Heart left ventricle (tissue), 16 donors: ENCODE measurements at regions of chr1 and their contacts with region 1.

Region 1: DNA sequence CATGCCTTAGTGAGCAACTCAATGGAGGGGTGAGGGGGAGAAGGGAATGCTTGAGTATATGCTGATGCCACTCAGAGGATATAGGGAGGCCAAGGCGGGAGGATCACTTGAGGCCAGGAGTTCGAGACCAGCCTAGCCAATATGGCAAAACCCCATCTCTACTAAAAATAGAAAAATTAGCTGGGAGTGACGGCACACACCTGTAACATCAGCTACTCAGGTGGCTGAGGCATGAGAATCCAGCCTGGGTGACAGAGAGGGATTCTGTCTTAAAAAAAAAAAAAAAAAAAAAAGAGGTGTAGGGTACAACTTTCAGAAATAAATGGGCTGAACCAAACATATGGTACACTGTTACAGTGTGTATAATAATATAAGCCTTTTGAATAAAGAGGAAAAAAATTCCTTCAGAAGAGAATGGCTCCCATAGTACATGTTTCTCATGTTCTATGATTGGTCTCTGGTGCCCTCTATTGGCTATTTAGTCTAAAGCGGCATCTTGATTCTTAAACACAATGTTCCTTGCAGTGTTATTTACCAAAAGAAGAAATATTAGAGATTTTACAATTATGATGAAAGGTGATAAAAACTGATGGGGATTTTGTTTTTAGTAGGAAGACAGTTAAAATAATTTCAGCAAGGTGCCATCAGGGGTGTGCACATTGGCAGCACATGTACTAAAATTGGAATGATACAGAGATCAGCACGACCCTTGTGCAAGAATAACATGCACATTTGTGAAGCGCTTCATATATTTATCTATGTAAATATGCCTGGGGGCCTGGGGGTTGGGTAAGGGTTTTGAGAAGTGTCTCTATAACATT is 109.8 kb downstream of the PATJ start:
- DNase-seq: peak in 1 of 5 donors; percentile 20
- ATAC-seq: peak in 3 of 4 donors; percentile 54 to 77 (median 72)
- H3K4me3 ChIP-seq: no peak overlapping the region
- H3K27ac ChIP-seq: no peak overlapping the region
- H3K4me1 ChIP-seq: peaks cover 0 to 5% (median 0%) of the 10 kb centered on the region in 12 donors
- H3K27me3 ChIP-seq: no peaks in the 10 kb centered on the region
- CTCF ChIP-seq: peak; percentile 53 to 84 (median 76)
- POLR2A ChIP-seq: no peak

Region 2: DNA sequence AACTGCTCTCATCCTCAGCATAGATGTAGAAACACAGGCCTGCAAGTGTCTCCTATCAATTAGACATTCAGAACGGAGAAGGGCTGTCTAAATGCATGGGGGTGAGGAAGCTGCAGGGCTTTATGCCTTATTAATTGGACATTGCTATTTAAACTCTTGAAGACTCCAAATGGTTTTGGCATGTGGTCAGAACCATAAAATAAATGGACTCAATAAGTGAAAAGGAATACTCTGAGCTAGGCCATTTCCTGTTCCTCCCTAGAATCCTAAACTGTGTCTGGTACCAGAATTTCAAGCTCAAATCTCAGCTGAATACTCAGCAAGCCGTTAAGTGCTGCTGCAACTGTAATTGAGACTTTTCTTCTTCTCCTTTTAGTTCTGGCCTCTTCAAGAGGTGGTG is 1698.1 kb before region 1 on chr1:
- intact Hi-C with region 1: loop called in 1 of 10 experiments (anchors 10 kb)
- DNase-seq: no peak
- ATAC-seq: no peak
- H3K4me3 ChIP-seq: no peak overlapping the region
- H3K27ac ChIP-seq: no peak overlapping the region
- H3K4me1 ChIP-seq: no peaks in the 10 kb centered on the region
- H3K27me3 ChIP-seq: no peaks in the 10 kb centered on the region
- CTCF ChIP-seq: no peak
- POLR2A ChIP-seq: no peak

Region 3: GRCh38 chr1:60848583-60849188 is 1003.4 kb before region 1 on chr1:
- intact Hi-C with region 1: loop called in 3 of 10 experiments (anchors 5 to 10 kb)
- DNase-seq: no peak
- ATAC-seq: no peak
- H3K4me3 ChIP-seq: no peak overlapping the region
- H3K27ac ChIP-seq: no peak overlapping the region
- H3K4me1 ChIP-seq: peaks cover 0 to under 1% (median 0%) of the 10 kb centered on the region in 12 donors
- H3K27me3 ChIP-seq: no peaks in the 10 kb centered on the region
- CTCF ChIP-seq: peak; percentile 29 to 62 (median 52)
- POLR2A ChIP-seq: no peak

Region 4: GRCh38 chr1:60969971-60970509 is 882.0 kb before region 1 on chr1:
- intact Hi-C with region 1: loop called in 9 of 10 experiments (anchors 2 to 10 kb)
- DNase-seq: no peak
- ATAC-seq: peak; percentile 48 to 78 (median 60)
- H3K4me3 ChIP-seq: peak overlapping the region in 4 of 12 donors; percentile 2 to 25 (median 10)
- H3K27ac ChIP-seq: peak overlapping the region in 8 of 12 donors; percentile 31 to 79 (median 62)
- H3K4me1 ChIP-seq: peaks cover 0 to 15% (median 2%) of the 10 kb centered on the region in 12 donors
- H3K27me3 ChIP-seq: no peaks in the 10 kb centered on the region
- CTCF ChIP-seq: peak in 11 of 12 donors; percentile 32 to 69 (median 56)
- POLR2A ChIP-seq: no peak

Region 5: GRCh38 chr1:61043010-61043820 is 808.8 kb before region 1 on chr1:
- intact Hi-C with region 1: loop called in 6 of 10 experiments (anchors 5 to 10 kb)
- DNase-seq: peak; percentile 89 to 95 (median 90)
- ATAC-seq: peak; percentile 87 to 97 (median 96)
- H3K4me3 ChIP-seq: peak overlapping the region; percentile 28 to 67 (median 59)
- H3K27ac ChIP-seq: peak overlapping the region in 10 of 12 donors; percentile 22 to 82 (median 72)
- H3K4me1 ChIP-seq: peaks cover 0 to 11% (median 4%) of the 10 kb centered on the region in 12 donors
- H3K27me3 ChIP-seq: no peaks in the 10 kb centered on the region
- CTCF ChIP-seq: peak; percentile 86 to 94 (median 92)
- POLR2A ChIP-seq: no peak

Region 6: DNA sequence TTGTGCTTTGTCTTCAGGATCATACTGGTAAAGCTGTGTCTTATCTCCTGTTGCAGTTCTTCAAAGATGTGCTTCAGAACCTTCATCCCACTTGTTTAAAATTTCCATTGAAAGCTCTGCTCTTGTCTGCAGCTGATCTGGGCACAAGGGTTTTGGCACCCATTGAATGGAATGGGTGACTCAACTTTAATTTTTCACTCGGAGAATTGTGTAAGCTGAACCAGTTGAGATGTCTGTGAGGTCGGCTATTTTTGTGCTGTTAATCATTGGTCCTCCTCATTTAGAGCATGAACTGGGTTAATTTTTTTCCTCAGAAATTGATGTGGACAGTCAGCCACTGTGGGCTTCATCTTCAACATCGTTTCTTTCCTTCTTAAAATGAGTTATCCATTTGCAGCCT is 379.2 kb before region 1 on chr1:
- intact Hi-C with region 1: loop called in 3 of 10 experiments (anchors 10 kb)
- DNase-seq: no peak
- ATAC-seq: no peak
- H3K4me3 ChIP-seq: no peak overlapping the region
- H3K27ac ChIP-seq: no peak overlapping the region
- H3K4me1 ChIP-seq: no peaks in the 10 kb centered on the region
- H3K27me3 ChIP-seq: no peaks in the 10 kb centered on the region
- CTCF ChIP-seq: no peak
- POLR2A ChIP-seq: no peak

Region 7: DNA sequence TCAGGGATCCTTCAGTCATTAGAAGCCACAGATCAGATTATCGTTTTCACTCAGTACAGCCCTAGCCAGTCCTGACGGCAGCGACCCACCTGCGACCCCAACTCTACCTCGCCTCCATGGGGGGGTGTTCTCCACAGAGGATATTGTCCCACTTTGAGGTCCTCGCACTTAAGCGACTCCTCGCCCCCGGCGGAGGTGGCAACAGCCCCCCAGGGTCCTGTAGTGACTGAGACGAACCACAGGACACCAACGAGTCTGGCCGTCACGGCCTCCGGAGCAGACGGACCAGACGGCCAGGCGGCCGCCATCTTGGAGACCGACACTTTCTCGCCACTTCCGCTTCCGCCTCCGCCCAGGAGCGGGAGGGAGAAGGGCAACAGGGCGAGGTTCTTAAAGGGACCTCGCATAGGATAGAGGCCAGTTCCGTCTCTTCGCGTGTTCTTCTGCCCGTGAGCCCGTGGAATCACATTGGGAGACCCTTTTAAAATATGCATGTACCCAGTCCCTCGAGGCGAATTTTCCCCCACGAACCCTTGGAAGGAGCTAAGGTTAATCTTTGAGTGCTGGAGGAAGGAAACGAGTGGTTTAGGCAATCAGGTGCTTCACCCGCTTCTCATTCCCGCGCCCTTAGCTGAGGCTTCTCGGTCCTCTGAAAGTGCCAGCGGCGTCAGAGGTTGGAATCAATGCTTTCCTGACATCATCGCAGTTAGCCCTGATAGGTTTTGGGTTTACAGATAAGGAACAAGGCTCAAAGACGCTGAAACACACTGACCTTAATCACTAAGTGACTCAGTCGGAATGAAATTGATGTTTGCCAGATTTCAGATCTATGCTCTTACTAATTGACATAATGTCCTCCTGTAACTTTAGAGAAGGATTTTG is 127.0 kb before region 1 on chr1 and contains the start of gene TM2D1:
- intact Hi-C with region 1: loop called in 2 of 10 experiments (anchors 5 kb)
- DNase-seq: peak; percentile 88 to 94 (median 93)
- ATAC-seq: peak; percentile 97 to 99 (median 99)
- H3K4me3 ChIP-seq: peak within 1 kb of the TSS; percentile 65 to 99 (median 92)
- H3K27ac ChIP-seq: peak within 1 kb of the TSS; percentile 72 to 97 (median 92)
- H3K4me1 ChIP-seq: peaks cover 0 to 28% (median 15%) of the 10 kb centered on the region in 12 donors
- H3K27me3 ChIP-seq: no peaks in the 10 kb centered on the region
- CTCF ChIP-seq: no peak
- POLR2A ChIP-seq: peak; percentile 23 to 67
- total RNA-seq, gene TM2D1: 28.5 to 44.0 (median 34.4) TPM

Region 8: DNA sequence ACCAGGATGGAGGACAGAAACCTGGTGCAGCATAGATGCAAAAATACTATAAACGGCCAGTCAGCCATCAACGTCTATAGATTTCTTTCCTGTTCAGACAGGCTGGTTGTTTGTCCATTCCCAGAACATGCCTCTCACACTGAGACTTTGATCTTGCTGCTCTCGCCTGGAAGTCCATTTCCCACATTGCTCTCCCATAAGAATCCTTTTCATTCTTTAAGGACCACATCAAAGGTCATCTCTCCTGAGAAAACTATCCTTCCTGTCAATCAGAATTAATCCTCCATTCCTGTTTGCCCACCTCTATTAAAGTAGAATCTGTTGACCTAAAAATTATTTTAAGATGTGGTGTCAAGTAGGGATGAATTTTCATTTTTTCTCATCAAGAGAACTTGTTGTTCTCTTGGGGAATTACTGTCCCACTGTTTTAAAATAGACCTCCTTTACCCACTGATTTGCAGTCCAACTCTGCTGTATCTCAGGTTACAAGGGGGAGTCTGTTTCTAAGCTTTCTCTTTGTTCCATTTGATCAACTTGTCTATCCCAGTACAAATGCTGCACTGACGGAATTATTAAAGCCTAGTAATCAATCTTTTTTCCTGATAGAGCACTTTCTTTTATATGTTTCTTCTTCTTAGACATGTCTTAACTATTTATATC is 62.9 kb after region 1 on chr1:
- intact Hi-C with region 1: no loop called
- DNase-seq: no peak
- ATAC-seq: no peak
- H3K4me3 ChIP-seq: no peak overlapping the region
- H3K27ac ChIP-seq: no peak overlapping the region
- H3K4me1 ChIP-seq: no peaks in the 10 kb centered on the region
- H3K27me3 ChIP-seq: no peaks in the 10 kb centered on the region
- CTCF ChIP-seq: no peak
- POLR2A ChIP-seq: no peak

Region 9: DNA sequence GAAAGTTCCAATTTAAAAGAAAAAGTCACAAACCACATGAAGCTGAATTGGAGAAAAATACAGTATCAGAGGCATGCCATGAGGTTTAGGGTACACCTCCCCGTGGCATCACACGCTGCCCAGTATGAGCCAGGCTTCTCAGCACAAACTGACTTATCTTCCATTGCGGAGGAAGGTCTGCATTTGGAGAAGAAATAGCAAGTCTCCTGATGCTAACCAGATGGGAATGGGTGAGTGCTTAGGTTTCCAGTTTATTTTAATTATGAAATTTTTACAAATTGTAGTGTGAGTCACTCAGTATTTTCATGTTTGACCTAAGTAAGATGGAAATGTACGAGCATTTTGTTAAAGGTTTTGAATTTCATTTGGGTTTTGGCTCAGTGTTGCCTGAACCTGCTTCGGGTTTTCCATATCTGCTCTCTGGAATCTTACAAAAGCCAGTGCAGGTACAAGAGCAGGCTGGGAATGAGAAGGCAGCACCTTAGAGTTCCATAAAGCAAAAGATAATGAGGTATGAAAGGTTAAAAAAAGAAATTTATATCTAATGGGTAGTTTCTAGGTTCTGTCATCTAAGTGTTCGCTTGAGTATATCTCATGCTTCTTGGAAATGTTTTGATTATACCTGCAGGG is 104.1 kb after region 1 on chr1:
- intact Hi-C with region 1: no loop called
- DNase-seq: no peak
- ATAC-seq: peak in 1 of 4 donors; percentile 25
- H3K4me3 ChIP-seq: peak overlapping the region in 6 of 12 donors; percentile 1 to 26 (median 10)
- H3K27ac ChIP-seq: peak overlapping the region in 8 of 12 donors; percentile 24 to 85 (median 40)
- H3K4me1 ChIP-seq: peaks cover 0 to 12% (median 3%) of the 10 kb centered on the region in 12 donors
- H3K27me3 ChIP-seq: no peaks in the 10 kb centered on the region
- CTCF ChIP-seq: no peak
- POLR2A ChIP-seq: no peak